ENCODE measurements at regions of chr10 and their contacts with region 1.

Region 1: GRCh38 chr10:119859420-119860258 is 13.0 kb downstream of the MCMBP start:
- DNase-seq: peak in 2 of 9 experiments; percentile 59 to 72
- ATAC-seq: peak; percentile 78
- H3K4me3 ChIP-seq: no peak overlapping the region
- H3K4me3 Mint-ChIP-seq: no peak overlapping the region
- H3K27ac ChIP-seq: peak overlapping the region in 1 of 2 experiments; percentile 23
- H3K27ac Mint-ChIP-seq: peak overlapping the region; percentile 30
- H3K4me1 ChIP-seq: peaks cover 10% of the 10 kb centered on the region
- H3K4me1 Mint-ChIP-seq: peaks cover 32% of the 10 kb centered on the region
- H3K27me3 ChIP-seq: no peaks in the 10 kb centered on the region
- H3K27me3 Mint-ChIP-seq: no peaks in the 10 kb centered on the region
- CTCF ChIP-seq: peak; percentile 79

Region 2: DNA sequence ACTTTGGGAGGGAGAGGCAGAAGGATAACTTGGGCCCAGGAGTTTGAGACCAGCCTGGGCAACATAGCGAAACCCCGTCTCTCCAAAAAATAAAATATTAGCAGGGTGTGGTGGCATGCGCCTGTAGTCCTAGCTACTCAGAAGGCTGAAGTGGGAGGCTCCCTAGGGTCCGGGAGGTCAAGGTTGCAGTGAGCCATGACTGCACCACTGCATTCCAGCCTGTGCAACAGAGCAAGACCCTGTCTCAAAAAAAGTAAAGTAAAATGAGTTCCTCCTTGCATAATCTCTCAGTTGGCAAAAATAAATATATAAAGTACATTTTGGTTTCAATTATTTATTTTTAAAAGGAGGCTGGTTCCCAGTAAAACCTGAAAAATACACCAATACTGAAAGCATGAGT is 818.3 kb before region 1 on chr10:
- CTCF ChIA-PET with region 1: no interaction called
- POLR2A ChIA-PET with region 1: no interaction called
- intact Hi-C with region 1: loop called in 1 of 2 experiments (anchors 10 kb)
- DNase-seq: no peak
- ATAC-seq: no peak
- H3K4me3 ChIP-seq: no peak overlapping the region
- H3K4me3 Mint-ChIP-seq: no peak overlapping the region
- H3K27ac ChIP-seq: no peak overlapping the region
- H3K27ac Mint-ChIP-seq: no peak overlapping the region
- H3K4me1 ChIP-seq: no peaks in the 10 kb centered on the region
- H3K4me1 Mint-ChIP-seq: peaks cover 16% of the 10 kb centered on the region
- H3K27me3 ChIP-seq: no peaks in the 10 kb centered on the region
- H3K27me3 Mint-ChIP-seq: no peaks in the 10 kb centered on the region
- CTCF ChIP-seq: no peak

Region 3: DNA sequence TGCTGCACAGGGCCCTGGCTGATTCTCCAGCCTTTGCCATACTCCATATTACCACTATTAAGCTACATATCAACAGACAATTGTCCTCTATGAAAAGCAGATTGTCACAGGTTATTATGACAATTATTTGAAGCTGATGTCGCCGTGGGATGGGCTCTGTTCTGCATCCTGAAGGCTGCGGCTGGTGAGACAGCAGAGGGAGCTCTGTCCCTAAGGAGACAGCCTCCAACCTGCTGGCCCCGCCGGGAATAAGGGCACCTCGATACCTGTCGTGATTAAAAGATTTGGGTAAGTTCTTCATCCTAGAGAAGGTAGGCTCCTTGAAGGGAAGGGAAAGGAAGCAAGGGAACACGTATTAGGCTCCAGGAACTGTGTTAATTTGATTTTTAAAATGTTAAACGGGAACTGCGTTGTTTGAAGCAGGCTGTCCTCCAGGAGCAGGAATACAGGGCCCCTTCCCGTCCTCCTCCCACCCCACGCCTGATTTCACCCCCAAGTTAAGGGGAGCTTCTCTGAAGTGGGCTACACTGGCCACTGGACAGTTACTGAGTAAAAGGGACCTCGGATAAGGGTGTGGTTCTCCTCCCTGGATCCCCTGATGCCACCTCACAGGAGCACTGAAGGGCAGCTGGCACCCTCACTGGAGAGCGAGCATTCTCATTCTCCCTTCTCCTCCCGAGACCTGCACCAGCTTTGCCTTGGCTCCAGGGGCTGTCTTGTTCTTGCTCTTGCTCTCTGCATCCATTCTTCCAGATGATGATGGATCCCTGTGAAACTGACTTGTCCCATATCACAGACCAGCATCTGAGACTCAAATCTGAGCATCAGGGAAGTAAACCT is 251.1 kb before region 1 on chr10:
- CTCF ChIA-PET with region 1: interaction called, 4 read pairs
- POLR2A ChIA-PET with region 1: no interaction called
- intact Hi-C with region 1: loop called in 1 of 2 experiments (anchors 1 kb)
- DNase-seq: peak in 7 of 9 experiments; percentile 27 to 55 (median 34)
- ATAC-seq: peak; percentile 44
- H3K4me3 ChIP-seq: no peak overlapping the region
- H3K4me3 Mint-ChIP-seq: peak overlapping the region; percentile 33
- H3K27ac ChIP-seq: no peak overlapping the region
- H3K27ac Mint-ChIP-seq: no peak overlapping the region
- H3K4me1 ChIP-seq: no peaks in the 10 kb centered on the region
- H3K4me1 Mint-ChIP-seq: peaks cover 8% of the 10 kb centered on the region
- H3K27me3 ChIP-seq: no peaks in the 10 kb centered on the region
- H3K27me3 Mint-ChIP-seq: peaks cover 4% of the 10 kb centered on the region
- CTCF ChIP-seq: no peak

Region 4: GRCh38 chr10:119686439-119687191 is 173.0 kb before region 1 on chr10:
- CTCF ChIA-PET with region 1: interaction called, 37 read pairs
- POLR2A ChIA-PET with region 1: no interaction called
- intact Hi-C with region 1: loop called (anchors 1 kb)
- DNase-seq: peak; percentile 52 to 89 (median 83)
- ATAC-seq: peak; percentile 95
- H3K4me3 ChIP-seq: peak overlapping the region; percentile 41 to 42
- H3K4me3 Mint-ChIP-seq: peak overlapping the region; percentile 79
- H3K27ac ChIP-seq: peak overlapping the region in 1 of 2 experiments; percentile 36
- H3K27ac Mint-ChIP-seq: peak overlapping the region; percentile 37
- H3K4me1 ChIP-seq: peaks cover 8% of the 10 kb centered on the region
- H3K4me1 Mint-ChIP-seq: peaks cover 16% of the 10 kb centered on the region
- H3K27me3 ChIP-seq: no peaks in the 10 kb centered on the region
- H3K27me3 Mint-ChIP-seq: peaks cover 4% of the 10 kb centered on the region
- CTCF ChIP-seq: peak; percentile 92

Region 5: GRCh38 chr10:119872860-119873681 is 13.4 kb after region 1 on chr10:
- CTCF ChIA-PET with region 1: interaction called, 20 read pairs
- POLR2A ChIA-PET with region 1: interaction called, 7 read pairs
- intact Hi-C with region 1: no loop called
- DNase-seq: peak; percentile 79 to 95 (median 87)
- ATAC-seq: peak; percentile 90
- H3K4me3 ChIP-seq: peak overlapping the region; percentile 68 to 96
- H3K4me3 Mint-ChIP-seq: peak overlapping the region; percentile 88
- H3K27ac ChIP-seq: peak overlapping the region; percentile 81 to 86
- H3K27ac Mint-ChIP-seq: peak overlapping the region; percentile 87
- H3K4me1 ChIP-seq: peaks cover 22% of the 10 kb centered on the region
- H3K4me1 Mint-ChIP-seq: peaks cover 39% of the 10 kb centered on the region
- H3K27me3 ChIP-seq: no peaks in the 10 kb centered on the region
- H3K27me3 Mint-ChIP-seq: no peaks in the 10 kb centered on the region
- CTCF ChIP-seq: no peak

Region 6: DNA sequence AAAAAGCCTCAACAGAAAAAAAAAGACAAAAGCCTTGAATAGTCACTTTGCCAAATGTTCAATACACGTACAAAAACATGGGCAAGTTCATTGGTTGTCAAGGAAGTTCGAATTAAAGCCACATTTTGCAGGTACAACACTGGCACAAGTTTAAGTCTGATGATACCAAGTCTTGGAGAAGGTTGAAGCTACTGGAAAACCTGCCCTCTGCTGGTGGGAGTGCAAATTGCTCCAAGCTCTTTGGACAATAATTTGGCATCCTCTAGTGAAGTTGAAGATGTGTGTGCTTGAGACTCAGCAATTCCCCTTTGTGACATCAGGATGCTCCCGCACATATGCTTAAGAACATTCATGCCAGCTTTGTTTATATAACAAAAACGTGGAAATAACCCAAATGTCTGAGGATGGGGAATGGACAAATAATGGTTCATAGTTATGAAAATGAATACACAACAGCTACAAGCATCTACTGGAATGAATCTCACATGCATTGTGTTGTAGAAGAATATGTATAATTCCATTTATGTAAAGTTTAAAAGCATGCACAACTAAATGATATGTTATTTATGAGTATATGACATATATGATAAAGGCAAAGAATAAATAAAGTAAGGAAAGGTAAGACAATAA is 477.4 kb after region 1 on chr10:
- CTCF ChIA-PET with region 1: no interaction called
- POLR2A ChIA-PET with region 1: no interaction called
- intact Hi-C with region 1: loop called in 1 of 2 experiments (anchors 10 kb)
- DNase-seq: peak; percentile 7 to 57 (median 43)
- ATAC-seq: no peak
- H3K4me3 ChIP-seq: no peak overlapping the region
- H3K4me3 Mint-ChIP-seq: no peak overlapping the region
- H3K27ac ChIP-seq: no peak overlapping the region
- H3K27ac Mint-ChIP-seq: no peak overlapping the region
- H3K4me1 ChIP-seq: no peaks in the 10 kb centered on the region
- H3K4me1 Mint-ChIP-seq: no peaks in the 10 kb centered on the region
- H3K27me3 ChIP-seq: no peaks in the 10 kb centered on the region
- H3K27me3 Mint-ChIP-seq: peaks cover 17% of the 10 kb centered on the region
- CTCF ChIP-seq: peak; percentile 62